ENCODE measurements at regions of chr13 and their contacts with region 1.

Region 1: DNA sequence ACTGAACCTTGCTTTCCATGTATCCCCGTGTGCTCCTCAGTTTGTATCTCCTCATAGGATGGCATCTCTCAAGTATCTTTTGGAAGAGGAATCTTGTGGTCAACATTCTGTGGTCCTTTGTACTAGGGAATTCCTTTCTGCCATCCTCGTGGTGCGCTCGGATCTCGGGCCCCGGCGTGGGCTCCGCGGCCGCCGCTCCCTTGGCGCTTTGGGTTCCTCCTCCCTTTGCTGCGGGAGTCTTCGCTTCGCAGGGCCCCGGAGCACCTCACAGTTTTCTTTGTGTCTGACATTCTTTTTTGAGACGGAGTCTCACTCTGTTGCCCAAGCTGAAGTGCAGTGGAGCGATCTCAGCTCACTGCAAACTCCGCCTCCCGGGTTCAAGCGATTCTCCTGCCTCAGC is 264.7 kb downstream of the IRS2 start:
- DNase-seq: no peak

Region 2: DNA sequence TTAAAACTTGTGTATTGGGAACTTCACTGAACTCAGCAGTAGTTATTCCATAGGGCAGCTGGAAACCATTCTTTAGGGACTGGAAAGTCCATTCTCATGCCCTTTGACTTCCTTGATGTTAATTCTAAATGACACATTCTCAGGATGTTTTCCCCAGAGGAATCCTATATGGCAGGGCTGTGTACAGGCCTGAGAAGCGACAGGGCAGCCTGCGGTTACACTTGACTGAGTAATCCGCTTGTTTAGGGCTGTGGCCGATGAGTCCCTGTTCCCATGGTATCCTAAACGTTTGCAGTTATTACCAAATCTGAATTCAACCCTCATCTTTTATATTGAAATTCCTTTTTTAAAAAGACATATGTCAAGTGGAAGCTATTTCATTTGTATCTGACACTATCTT is 868.8 kb after region 1 on chr13:
- intact Hi-C with region 1: loop called in 1 of 2 experiments (anchors 5 kb)
- DNase-seq: no peak